ENCODE measurements at regions of chr1 and their contacts with region 1.

Region 1: GRCh38 chr1:202462342-202463076 is 114.0 kb downstream of the PPP1R12B start:
- DNase-seq: no peak
- H3K4me3 Mint-ChIP-seq: peak overlapping the region; percentile 2
- H3K27ac Mint-ChIP-seq: peak overlapping the region; percentile 32
- H3K4me1 Mint-ChIP-seq: peaks cover 77% of the 10 kb centered on the region
- H3K27me3 Mint-ChIP-seq: no peaks in the 10 kb centered on the region
- CTCF ChIP-seq: no peak

Region 2: GRCh38 chr1:202348509-202349205 is 113.9 kb before region 1 on chr1 and contains the start of gene PPP1R12B:
- CTCF ChIA-PET with region 1: no interaction called
- intact Hi-C with region 1: loop called (anchors 5 kb)
- DNase-seq: peak; percentile 98
- H3K4me3 Mint-ChIP-seq: peak within 1 kb of the TSS; percentile 96
- H3K27ac Mint-ChIP-seq: peak within 1 kb of the TSS; percentile 81
- H3K4me1 Mint-ChIP-seq: peaks cover 36% of the 10 kb centered on the region
- H3K27me3 Mint-ChIP-seq: no peaks in the 10 kb centered on the region
- CTCF ChIP-seq: no peak
- total RNA-seq, gene PPP1R12B: 31.8 and 32.9 TPM in 2 replicates

Region 3: GRCh38 chr1:202362212-202362611 is 100.3 kb before region 1 on chr1:
- CTCF ChIA-PET with region 1: no interaction called
- intact Hi-C with region 1: no loop called
- DNase-seq: no peak
- H3K4me3 Mint-ChIP-seq: no peak overlapping the region
- H3K27ac Mint-ChIP-seq: no peak overlapping the region
- H3K4me1 Mint-ChIP-seq: no peaks in the 10 kb centered on the region
- H3K27me3 Mint-ChIP-seq: no peaks in the 10 kb centered on the region
- CTCF ChIP-seq: no peak

Region 4: GRCh38 chr1:202501281-202501680 is 38.8 kb after region 1 on chr1:
- CTCF ChIA-PET with region 1: interaction called, 6 read pairs
- intact Hi-C with region 1: loop called (anchors 2 kb)
- DNase-seq: peak; percentile 24
- H3K4me3 Mint-ChIP-seq: no peak overlapping the region
- H3K27ac Mint-ChIP-seq: no peak overlapping the region
- H3K4me1 Mint-ChIP-seq: no peaks in the 10 kb centered on the region
- H3K27me3 Mint-ChIP-seq: no peaks in the 10 kb centered on the region
- CTCF ChIP-seq: peak; percentile 29

Region 5: GRCh38 chr1:202571347-202572339 is 109.1 kb after region 1 on chr1:
- CTCF ChIA-PET with region 1: interaction called, 7 read pairs
- intact Hi-C with region 1: loop called (anchors 10 kb)
- DNase-seq: peak; percentile 60
- H3K4me3 Mint-ChIP-seq: no peak overlapping the region
- H3K27ac Mint-ChIP-seq: no peak overlapping the region
- H3K4me1 Mint-ChIP-seq: no peaks in the 10 kb centered on the region
- H3K27me3 Mint-ChIP-seq: no peaks in the 10 kb centered on the region
- CTCF ChIP-seq: peak; percentile 75

Region 6: GRCh38 chr1:202599677-202600431 is 137.3 kb after region 1 on chr1:
- CTCF ChIA-PET with region 1: interaction called, 11 read pairs
- intact Hi-C with region 1: no loop called
- DNase-seq: peak; percentile 80
- H3K4me3 Mint-ChIP-seq: no peak overlapping the region
- H3K27ac Mint-ChIP-seq: no peak overlapping the region
- H3K4me1 Mint-ChIP-seq: no peaks in the 10 kb centered on the region
- H3K27me3 Mint-ChIP-seq: no peaks in the 10 kb centered on the region
- CTCF ChIP-seq: peak; percentile 83

Region 7: GRCh38 chr1:202716654-202717053 is 254.1 kb after region 1 on chr1:
- CTCF ChIA-PET with region 1: interaction called, 32 read pairs
- intact Hi-C with region 1: loop called (anchors 5 kb)
- DNase-seq: no peak
- H3K4me3 Mint-ChIP-seq: no peak overlapping the region
- H3K27ac Mint-ChIP-seq: no peak overlapping the region
- H3K4me1 Mint-ChIP-seq: peaks cover 10% of the 10 kb centered on the region
- H3K27me3 Mint-ChIP-seq: peaks cover 33% of the 10 kb centered on the region
- CTCF ChIP-seq: no peak

Measured in Calu3 (cell line).